ENCODE measurements at regions of chr13 and their contacts with region 1.

Region 1: DNA sequence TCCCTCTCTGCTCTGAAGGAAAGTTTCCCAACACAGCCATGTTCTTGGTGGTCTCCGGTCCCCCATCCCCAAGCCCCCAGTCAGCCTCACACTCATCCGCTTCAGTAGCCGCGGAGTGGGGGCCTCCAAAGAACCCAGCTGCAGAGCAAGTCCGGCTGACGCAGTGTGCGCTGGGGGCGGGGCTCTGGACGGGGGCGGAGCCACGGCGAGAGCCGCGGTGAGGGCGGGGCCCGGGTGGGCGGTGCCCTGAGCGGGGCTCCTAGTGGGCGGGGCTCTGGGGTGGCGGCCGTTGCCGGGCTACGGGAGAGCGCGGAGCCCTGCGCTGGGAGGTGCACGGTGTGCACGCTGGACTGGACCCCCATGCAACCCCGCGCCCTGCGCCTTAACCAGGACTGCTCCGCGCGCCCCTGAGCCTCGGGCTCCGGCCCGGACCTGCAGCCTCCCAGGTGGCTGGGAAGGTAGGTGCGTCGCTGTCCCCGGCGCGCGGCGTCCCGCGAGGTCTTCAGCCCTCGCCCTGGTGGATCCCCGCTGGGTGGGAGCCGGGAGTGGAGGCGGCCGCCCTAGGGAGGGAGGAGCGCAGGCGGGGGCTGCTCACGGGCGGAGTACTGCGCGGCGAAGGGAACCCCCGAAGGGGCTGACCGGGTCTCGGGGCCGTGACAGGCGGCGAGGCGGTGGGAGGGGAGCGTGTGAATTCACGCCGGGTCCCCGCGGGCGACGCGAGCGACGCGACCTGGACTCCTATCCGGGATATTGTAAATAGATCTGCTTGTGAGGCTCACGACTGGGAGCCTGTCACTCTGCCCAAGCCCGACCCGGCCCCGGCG is 9.1 kb downstream of the TNFRSF19 start:
- DNase-seq: peak; percentile 86 to 95 (median 92)
- ATAC-seq: peak; percentile 96
- H3K4me3 ChIP-seq: peak overlapping the region; percentile 60 to 76
- H3K4me3 Mint-ChIP-seq: peak overlapping the region; percentile 66
- H3K27ac ChIP-seq: peak overlapping the region; percentile 44 to 56
- H3K27ac Mint-ChIP-seq: no peak overlapping the region
- H3K4me1 ChIP-seq: peaks cover 10% of the 10 kb centered on the region
- H3K4me1 Mint-ChIP-seq: peaks cover 18% of the 10 kb centered on the region
- H3K27me3 ChIP-seq: peaks cover 8 to 15% of the 10 kb centered on the region in 2 experiments
- H3K27me3 Mint-ChIP-seq: peaks cover 44% of the 10 kb centered on the region
- CTCF ChIP-seq: no peak

Region 2: GRCh38 chr13:21603531-21604448 is 1975.5 kb before region 1 on chr13 and contains the start of gene MICU2:
- CTCF ChIA-PET with region 1: no interaction called
- POLR2A ChIA-PET with region 1: no interaction called
- intact Hi-C with region 1: loop called in 1 of 2 experiments (anchors 10 kb)
- DNase-seq: peak; percentile 91 to 98 (median 96)
- ATAC-seq: peak; percentile 92
- H3K4me3 ChIP-seq: peak within 1 kb of the TSS; percentile 73 to 85
- H3K4me3 Mint-ChIP-seq: peak within 1 kb of the TSS; percentile 84
- H3K27ac ChIP-seq: peak within 1 kb of the TSS; percentile 84 to 97
- H3K27ac Mint-ChIP-seq: peak within 1 kb of the TSS; percentile 94
- H3K4me1 ChIP-seq: peaks cover 24% of the 10 kb centered on the region
- H3K4me1 Mint-ChIP-seq: peaks cover 47% of the 10 kb centered on the region
- H3K27me3 ChIP-seq: no peaks in the 10 kb centered on the region
- H3K27me3 Mint-ChIP-seq: peaks cover 9% of the 10 kb centered on the region
- CTCF ChIP-seq: no peak
- total RNA-seq, gene MICU2: 28.3 to 36.0 TPM

Region 3: DNA sequence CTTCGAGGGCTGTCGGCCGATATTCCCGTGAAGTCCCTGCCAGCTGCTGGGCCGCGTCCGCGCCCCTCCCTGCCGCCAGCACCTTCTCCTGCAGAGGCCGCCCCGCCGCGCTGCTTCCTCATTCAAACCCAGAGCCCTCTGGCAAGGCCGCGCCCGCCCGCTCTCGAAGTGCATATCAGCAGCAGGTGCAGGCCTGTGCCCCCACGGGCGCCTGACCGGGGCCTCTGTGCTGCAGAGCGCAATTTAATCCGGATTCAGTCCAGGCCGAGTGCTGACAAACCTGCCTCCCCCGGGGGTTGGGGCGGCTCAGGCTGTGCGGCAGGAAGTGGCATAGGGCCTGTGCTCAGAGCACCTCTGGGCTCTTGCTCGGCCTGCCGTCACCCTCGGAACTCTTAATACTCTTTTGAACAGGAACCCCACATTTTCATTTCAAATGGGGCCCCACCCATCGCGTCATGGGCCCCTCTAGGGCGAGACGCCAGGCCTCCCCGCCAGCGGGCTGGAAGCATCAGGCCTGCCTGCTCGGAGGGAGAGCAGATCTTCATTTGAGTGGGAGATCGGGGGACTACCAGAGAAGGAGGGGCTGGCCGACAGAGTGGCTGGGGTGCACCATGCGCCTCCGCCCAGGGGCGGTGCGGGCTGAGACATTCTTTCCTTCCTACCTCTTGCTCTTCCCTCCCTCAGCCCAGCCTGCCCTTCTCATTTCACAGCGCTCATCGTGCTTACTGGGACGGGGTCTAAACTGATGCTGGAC is 116.6 kb after region 1 on chr13:
- CTCF ChIA-PET with region 1: no interaction called
- POLR2A ChIA-PET with region 1: no interaction called
- intact Hi-C with region 1: loop called in 1 of 2 experiments (anchors 5 kb)
- DNase-seq: peak; percentile 13 to 85 (median 60)
- ATAC-seq: peak; percentile 92
- H3K4me3 ChIP-seq: peak overlapping the region; percentile 38 to 46
- H3K4me3 Mint-ChIP-seq: peak overlapping the region; percentile 83
- H3K27ac ChIP-seq: peak overlapping the region; percentile 66 to 76
- H3K27ac Mint-ChIP-seq: peak overlapping the region; percentile 96
- H3K4me1 ChIP-seq: peaks cover 9% of the 10 kb centered on the region
- H3K4me1 Mint-ChIP-seq: peaks cover 16% of the 10 kb centered on the region
- H3K27me3 ChIP-seq: no peaks in the 10 kb centered on the region
- H3K27me3 Mint-ChIP-seq: no peaks in the 10 kb centered on the region
- CTCF ChIP-seq: no peak

Region 4: GRCh38 chr13:23888658-23889614 is 309.7 kb after region 1 on chr13 and contains the start of gene MIPEP:
- CTCF ChIA-PET with region 1: no interaction called
- POLR2A ChIA-PET with region 1: no interaction called
- intact Hi-C with region 1: loop called (anchors 1 to 2 kb)
- DNase-seq: peak; percentile 73 to 95 (median 87)
- ATAC-seq: peak; percentile 93
- H3K4me3 ChIP-seq: peak within 1 kb of the TSS; percentile 79
- H3K4me3 Mint-ChIP-seq: peak within 1 kb of the TSS; percentile 90
- H3K27ac ChIP-seq: peak within 1 kb of the TSS; percentile 61 to 71
- H3K27ac Mint-ChIP-seq: peak within 1 kb of the TSS; percentile 88
- H3K4me1 ChIP-seq: peaks cover 7% of the 10 kb centered on the region
- H3K4me1 Mint-ChIP-seq: peaks cover 23% of the 10 kb centered on the region
- H3K27me3 ChIP-seq: no peaks in the 10 kb centered on the region
- H3K27me3 Mint-ChIP-seq: peaks cover 3% of the 10 kb centered on the region
- CTCF ChIP-seq: peak; percentile 65
- total RNA-seq, gene MIPEP: 3.0 to 3.8 TPM

Region 5: GRCh38 chr13:23980160-23980551 is 400.9 kb after region 1 on chr13:
- CTCF ChIA-PET with region 1: no interaction called
- POLR2A ChIA-PET with region 1: no interaction called
- intact Hi-C with region 1: loop called in 1 of 2 experiments (anchors 5 kb)
- DNase-seq: peak; percentile 84 to 96 (median 90)
- ATAC-seq: peak; percentile 92
- H3K4me3 ChIP-seq: peak overlapping the region; percentile 56 to 79
- H3K4me3 Mint-ChIP-seq: peak overlapping the region; percentile 86
- H3K27ac ChIP-seq: peak overlapping the region in 1 of 2 experiments; percentile 51
- H3K27ac Mint-ChIP-seq: peak overlapping the region; percentile 34
- H3K4me1 ChIP-seq: peaks cover 10% of the 10 kb centered on the region
- H3K4me1 Mint-ChIP-seq: peaks cover 8% of the 10 kb centered on the region
- H3K27me3 ChIP-seq: peaks cover 8 to 10% of the 10 kb centered on the region in 2 experiments
- H3K27me3 Mint-ChIP-seq: peaks cover 17% of the 10 kb centered on the region
- CTCF ChIP-seq: no peak

Region 6: GRCh38 chr13:24911135-24911908 is 1332.0 kb after region 1 on chr13:
- CTCF ChIA-PET with region 1: no interaction called
- POLR2A ChIA-PET with region 1: no interaction called
- intact Hi-C with region 1: loop called in 1 of 2 experiments (anchors 10 kb)
- DNase-seq: no peak
- ATAC-seq: no peak
- H3K4me3 ChIP-seq: no peak overlapping the region
- H3K4me3 Mint-ChIP-seq: no peak overlapping the region
- H3K27ac ChIP-seq: no peak overlapping the region
- H3K27ac Mint-ChIP-seq: no peak overlapping the region
- H3K4me1 ChIP-seq: no peaks in the 10 kb centered on the region
- H3K4me1 Mint-ChIP-seq: no peaks in the 10 kb centered on the region
- H3K27me3 ChIP-seq: no peaks in the 10 kb centered on the region
- H3K27me3 Mint-ChIP-seq: no peaks in the 10 kb centered on the region
- CTCF ChIP-seq: no peak

Region 7: DNA sequence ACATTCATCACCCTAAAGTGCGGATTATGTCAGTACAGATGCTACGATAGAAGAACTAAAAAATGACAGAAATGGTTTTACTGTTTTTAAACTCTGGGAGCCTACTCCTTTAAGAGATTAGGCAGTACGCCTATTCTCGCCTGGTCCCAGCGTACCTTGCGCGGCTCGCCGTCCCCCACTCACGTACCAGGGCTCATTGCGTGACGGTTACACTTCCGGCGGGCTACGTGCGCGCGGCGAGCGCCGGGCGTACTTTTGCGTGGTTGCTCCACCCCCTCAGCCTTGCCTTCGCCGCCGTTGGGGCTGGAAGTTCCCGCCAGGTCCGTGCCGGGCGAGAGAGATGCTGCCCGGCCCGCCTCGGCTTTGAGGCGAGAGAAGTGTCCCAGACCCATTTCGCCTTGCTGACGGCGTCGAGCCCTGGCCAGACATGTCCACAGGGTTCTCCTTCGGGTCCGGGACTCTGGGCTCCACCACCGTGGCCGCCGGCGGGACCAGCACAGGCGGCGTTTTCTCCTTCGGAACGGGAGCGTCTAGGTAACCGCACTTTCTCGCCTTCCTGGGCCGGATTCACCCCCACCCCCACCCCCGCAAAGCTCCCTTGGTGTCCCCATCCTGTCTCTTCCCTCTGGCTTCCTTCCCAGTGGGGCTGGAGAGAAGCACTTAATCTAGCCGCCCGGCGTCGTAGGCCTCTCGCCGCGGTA is 1722.2 kb after region 1 on chr13 and contains the start of gene NUP58:
- CTCF ChIA-PET with region 1: no interaction called
- POLR2A ChIA-PET with region 1: no interaction called
- intact Hi-C with region 1: loop called in 1 of 2 experiments (anchors 5 kb)
- DNase-seq: peak; percentile 83 to 98 (median 93)
- ATAC-seq: peak; percentile 99
- H3K4me3 ChIP-seq: peak within 1 kb of the TSS; percentile 81 to 84
- H3K4me3 Mint-ChIP-seq: peak within 1 kb of the TSS; percentile 95
- H3K27ac ChIP-seq: peak within 1 kb of the TSS; percentile 83 to 92
- H3K27ac Mint-ChIP-seq: peak within 1 kb of the TSS; percentile 94
- H3K4me1 ChIP-seq: peaks cover 18% of the 10 kb centered on the region
- H3K4me1 Mint-ChIP-seq: peaks cover 46% of the 10 kb centered on the region
- H3K27me3 ChIP-seq: peaks cover 0 to 5% of the 10 kb centered on the region in 2 experiments
- H3K27me3 Mint-ChIP-seq: peaks cover 8% of the 10 kb centered on the region
- CTCF ChIP-seq: no peak
- total RNA-seq, gene NUP58: 73.2 to 78.9 TPM